ENCODE measurements at regions of chr12 and their contacts with region 1.

Region 1: GRCh38 chr12:53213348-53213747 is 6.3 kb upstream of the ITGB7 start:
- DNase-seq: peak; percentile 88
- ATAC-seq: peak; percentile 73
- H3K4me3 Mint-ChIP-seq: no peak overlapping the region
- H3K27ac Mint-ChIP-seq: no peak overlapping the region
- H3K4me1 Mint-ChIP-seq: peaks cover 73% of the 10 kb centered on the region
- H3K27me3 Mint-ChIP-seq: no peaks in the 10 kb centered on the region

Region 2: GRCh38 chr12:53180220-53180930 is 33.0 kb before region 1 on chr12 and contains the starts of genes CSAD and ZNF740:
- CTCF ChIA-PET with region 1: interaction called, 33 read pairs
- DNase-seq: peak; percentile 99
- ATAC-seq: peak; percentile 98
- H3K4me3 Mint-ChIP-seq: peak within 1 kb of the TSS; percentile 85
- H3K27ac Mint-ChIP-seq: peak within 1 kb of the TSS; percentile 98
- H3K4me1 Mint-ChIP-seq: peaks cover 50% of the 10 kb centered on the region
- H3K27me3 Mint-ChIP-seq: no peaks in the 10 kb centered on the region
- total RNA-seq, gene CSAD: 19.6 to 28.1 TPM
- total RNA-seq, gene ZNF740: 35.8 to 47.0 TPM

Region 3: GRCh38 chr12:53234271-53234914 is 21.0 kb after region 1 on chr12:
- CTCF ChIA-PET with region 1: interaction called, 60 read pairs
- DNase-seq: no peak
- ATAC-seq: no peak
- H3K4me3 Mint-ChIP-seq: no peak overlapping the region
- H3K27ac Mint-ChIP-seq: no peak overlapping the region
- H3K4me1 Mint-ChIP-seq: peaks cover 49% of the 10 kb centered on the region
- H3K27me3 Mint-ChIP-seq: no peaks in the 10 kb centered on the region

Region 4: DNA sequence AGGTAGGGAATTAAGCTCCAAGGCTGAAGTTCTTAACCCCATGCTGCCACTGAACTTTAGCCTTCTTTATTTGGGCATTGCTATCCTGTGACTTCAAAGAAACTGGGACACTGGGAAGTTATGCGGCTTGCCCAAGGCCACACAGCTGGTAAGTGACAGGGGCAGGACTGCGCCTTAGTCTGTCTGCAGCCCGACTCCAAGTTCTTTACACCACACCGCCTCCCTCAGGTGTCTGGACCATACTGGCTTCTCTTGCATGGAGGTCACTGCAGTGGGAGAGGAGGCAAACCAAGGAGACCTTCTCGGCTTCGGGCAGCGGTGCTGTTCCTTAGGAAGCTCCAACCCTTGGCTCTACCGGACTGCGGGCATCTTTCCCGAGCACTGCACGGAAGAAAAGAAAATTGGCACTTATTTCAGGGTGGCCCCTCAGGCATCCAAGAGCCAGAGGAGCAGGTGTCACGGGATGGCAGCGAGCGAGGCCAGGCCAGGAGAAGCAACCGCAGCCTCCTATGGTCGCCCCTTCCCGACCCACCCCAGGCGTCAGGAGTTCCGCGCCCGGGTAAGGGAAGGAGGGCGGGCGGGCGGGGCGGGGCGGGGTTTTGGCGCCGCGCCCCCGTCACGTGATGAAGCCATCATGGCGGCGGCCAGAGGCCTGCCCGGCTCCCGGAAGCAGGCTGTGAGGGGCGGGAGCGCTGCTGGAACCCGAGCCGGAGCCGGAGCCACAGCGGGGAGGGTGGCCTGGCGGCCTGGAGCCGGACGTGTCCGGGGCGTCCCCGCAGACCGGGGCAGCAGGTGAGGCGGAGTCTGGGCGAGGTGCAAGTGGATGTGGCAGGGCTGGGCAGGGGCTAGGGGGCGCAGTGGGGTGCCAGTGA is 38.4 kb after region 1 on chr12:
- CTCF ChIA-PET with region 1: interaction called, 294 read pairs
- DNase-seq: peak; percentile 81
- ATAC-seq: peak; percentile 89
- H3K4me3 Mint-ChIP-seq: peak overlapping the region; percentile 99
- H3K27ac Mint-ChIP-seq: peak overlapping the region; percentile 88
- H3K4me1 Mint-ChIP-seq: peaks cover 42% of the 10 kb centered on the region
- H3K27me3 Mint-ChIP-seq: no peaks in the 10 kb centered on the region

Region 5: DNA sequence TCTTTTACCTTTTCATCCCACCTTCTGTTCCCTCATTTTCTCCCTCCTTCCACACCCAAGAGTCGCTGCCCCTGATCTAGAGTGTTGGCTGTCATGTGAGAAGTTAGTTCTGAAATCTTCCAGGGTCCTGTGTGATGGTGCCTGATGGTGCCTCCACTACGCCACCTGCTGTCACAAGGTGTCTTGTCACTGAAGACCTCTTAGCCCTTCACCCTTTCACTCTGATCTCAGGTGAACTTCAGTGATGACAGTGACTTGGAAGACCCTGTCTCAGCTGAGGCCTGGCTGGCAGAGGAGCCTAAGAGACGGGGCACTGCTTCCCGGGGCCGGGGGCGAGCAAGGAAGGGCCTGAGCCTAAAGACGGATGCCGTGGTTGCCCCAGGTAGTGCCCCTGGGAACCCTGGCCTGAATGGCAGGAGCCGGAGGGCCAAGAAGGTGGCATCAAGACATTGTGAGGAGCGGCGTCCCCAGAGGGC is 74.4 kb after region 1 on chr12:
- CTCF ChIA-PET with region 1: interaction called, 43 read pairs
- DNase-seq: peak; percentile 75
- ATAC-seq: peak; percentile 80
- H3K4me3 Mint-ChIP-seq: no peak overlapping the region
- H3K27ac Mint-ChIP-seq: peak overlapping the region; percentile 5
- H3K4me1 Mint-ChIP-seq: peaks cover 4% of the 10 kb centered on the region
- H3K27me3 Mint-ChIP-seq: no peaks in the 10 kb centered on the region

Region 6: GRCh38 chr12:53344824-53345485 is 131.6 kb after region 1 on chr12:
- CTCF ChIA-PET with region 1: interaction called, 17 read pairs
- DNase-seq: peak; percentile 82
- ATAC-seq: peak; percentile 83
- H3K4me3 Mint-ChIP-seq: peak overlapping the region; percentile 79
- H3K27ac Mint-ChIP-seq: peak overlapping the region; percentile 71
- H3K4me1 Mint-ChIP-seq: peaks cover 21% of the 10 kb centered on the region
- H3K27me3 Mint-ChIP-seq: peaks cover 12% of the 10 kb centered on the region